Transverse colon (tissue), 4 donors: ENCODE measurements at regions of chr17 and their contacts with region 1.

Region 1: DNA sequence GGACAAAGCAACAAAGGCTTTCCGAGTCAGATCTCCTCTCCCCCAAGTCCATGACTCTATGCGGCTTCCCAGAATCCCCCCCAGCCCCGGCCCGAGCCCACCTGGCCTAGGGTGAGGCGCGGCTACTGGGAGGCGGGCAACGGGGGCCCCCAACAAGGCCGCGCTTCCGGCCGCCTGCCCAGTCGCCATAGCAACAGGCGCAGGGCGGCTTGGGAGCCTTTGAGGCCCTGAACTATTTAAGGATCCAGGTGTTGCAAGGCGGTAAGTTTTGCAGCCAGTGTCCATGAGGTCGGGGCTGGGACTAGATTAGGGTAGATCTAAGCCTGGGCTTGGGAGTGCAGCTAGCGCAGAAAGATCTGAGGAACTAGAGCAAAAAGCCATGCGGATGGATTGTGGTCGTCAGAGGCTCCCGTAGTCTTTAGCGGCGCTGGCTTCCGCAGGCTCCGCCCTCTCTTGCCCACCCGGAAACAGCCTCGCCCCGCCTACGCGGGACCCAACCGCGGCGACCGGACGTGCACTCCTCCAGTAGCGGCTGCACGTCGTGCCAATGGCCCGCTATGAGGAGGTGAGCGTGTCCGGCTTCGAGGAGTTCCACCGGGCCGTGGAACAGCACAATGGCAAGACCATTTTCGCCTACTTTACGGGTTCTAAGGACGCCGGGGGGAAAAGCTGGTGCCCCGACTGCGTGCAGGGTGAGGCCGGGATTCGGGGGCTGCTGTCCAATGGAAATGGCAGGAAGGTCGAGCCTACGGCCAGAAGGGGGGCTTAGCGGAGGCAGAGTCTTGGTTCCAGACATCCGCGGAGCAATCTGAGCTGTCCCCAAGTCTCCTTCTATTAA is at the starts of genes KIAA0753 and TXNDC17:
- DNase-seq: peak; percentile 94
- H3K4me3 ChIP-seq: peak within 1 kb of the TSS; percentile 73 to 92 (median 78)
- H3K27ac ChIP-seq: peak within 1 kb of the TSS; percentile 85 to 94 (median 92)
- H3K4me1 ChIP-seq: peaks cover 20 to 33% (median 30%) of the 10 kb centered on the region in 4 donors
- H3K27me3 ChIP-seq: no peaks in the 10 kb centered on the region
- CTCF ChIP-seq: no peak
- EP300 ChIP-seq: no peak
- POLR2A ChIP-seq: peak; percentile 95
- total RNA-seq, gene KIAA0753: 9.8 to 41.1 (median 16.9) TPM
- total RNA-seq, gene TXNDC17: 60.2 to 439 (median 238) TPM

Region 2: GRCh38 chr17:5080591-5080990 is 1560.2 kb before region 1 on chr17:
- in situ Hi-C with region 1: no loop called
- intact Hi-C with region 1: loop called (anchors 5 kb)
- DNase-seq: no peak
- H3K4me3 ChIP-seq: no peak overlapping the region
- H3K27ac ChIP-seq: no peak overlapping the region
- H3K4me1 ChIP-seq: peaks cover 5 to 20% (median 11%) of the 10 kb centered on the region in 4 donors
- H3K27me3 ChIP-seq: no peaks in the 10 kb centered on the region
- CTCF ChIP-seq: no peak
- EP300 ChIP-seq: no peak
- POLR2A ChIP-seq: no peak

Region 3: GRCh38 chr17:6374761-6375312 is 265.9 kb before region 1 on chr17:
- in situ Hi-C with region 1: no loop called
- intact Hi-C with region 1: no loop called
- DNase-seq: no peak
- H3K4me3 ChIP-seq: no peak overlapping the region
- H3K27ac ChIP-seq: no peak overlapping the region
- H3K4me1 ChIP-seq: no peaks in the 10 kb centered on the region
- H3K27me3 ChIP-seq: peaks cover 10% of the 10 kb centered on the region
- CTCF ChIP-seq: no peak
- EP300 ChIP-seq: no peak
- POLR2A ChIP-seq: no peak

Region 4: GRCh38 chr17:6651357-6651918 is 10.7 kb after region 1 on chr17 and contains the starts of genes C17orf100 and MED31:
- in situ Hi-C with region 1: no loop called
- intact Hi-C with region 1: no loop called
- DNase-seq: peak; percentile 98
- H3K4me3 ChIP-seq: peak within 1 kb of the TSS; percentile 63 to 90 (median 80)
- H3K27ac ChIP-seq: peak within 1 kb of the TSS; percentile 94 to 97 (median 96)
- H3K4me1 ChIP-seq: peaks cover 13 to 48% (median 28%) of the 10 kb centered on the region in 4 donors
- H3K27me3 ChIP-seq: peaks cover 24% of the 10 kb centered on the region
- CTCF ChIP-seq: no peak
- EP300 ChIP-seq: no peak
- POLR2A ChIP-seq: peak; percentile 82
- total RNA-seq, gene C17orf100: 1.4 to 1.7 TPM in 2 of 4 donors, not detected in the others
- total RNA-seq, gene MED31: 1.2 to 36.3 (median 5.9) TPM

Region 5: GRCh38 chr17:7014261-7014994 is 373.7 kb after region 1 on chr17:
- in situ Hi-C with region 1: loop called in 1 of 4 experiments (anchors 25 kb)
- intact Hi-C with region 1: no loop called
- DNase-seq: peak; percentile 99
- H3K4me3 ChIP-seq: peak overlapping the region; percentile 73 to 97 (median 84)
- H3K27ac ChIP-seq: peak overlapping the region; percentile 95 to 98 (median 96)
- H3K4me1 ChIP-seq: peaks cover 15 to 67% (median 40%) of the 10 kb centered on the region in 4 donors
- H3K27me3 ChIP-seq: no peaks in the 10 kb centered on the region
- CTCF ChIP-seq: peak; percentile 39 to 90 (median 75)
- EP300 ChIP-seq: peak; percentile 36
- POLR2A ChIP-seq: peak; percentile 96

Region 6: DNA sequence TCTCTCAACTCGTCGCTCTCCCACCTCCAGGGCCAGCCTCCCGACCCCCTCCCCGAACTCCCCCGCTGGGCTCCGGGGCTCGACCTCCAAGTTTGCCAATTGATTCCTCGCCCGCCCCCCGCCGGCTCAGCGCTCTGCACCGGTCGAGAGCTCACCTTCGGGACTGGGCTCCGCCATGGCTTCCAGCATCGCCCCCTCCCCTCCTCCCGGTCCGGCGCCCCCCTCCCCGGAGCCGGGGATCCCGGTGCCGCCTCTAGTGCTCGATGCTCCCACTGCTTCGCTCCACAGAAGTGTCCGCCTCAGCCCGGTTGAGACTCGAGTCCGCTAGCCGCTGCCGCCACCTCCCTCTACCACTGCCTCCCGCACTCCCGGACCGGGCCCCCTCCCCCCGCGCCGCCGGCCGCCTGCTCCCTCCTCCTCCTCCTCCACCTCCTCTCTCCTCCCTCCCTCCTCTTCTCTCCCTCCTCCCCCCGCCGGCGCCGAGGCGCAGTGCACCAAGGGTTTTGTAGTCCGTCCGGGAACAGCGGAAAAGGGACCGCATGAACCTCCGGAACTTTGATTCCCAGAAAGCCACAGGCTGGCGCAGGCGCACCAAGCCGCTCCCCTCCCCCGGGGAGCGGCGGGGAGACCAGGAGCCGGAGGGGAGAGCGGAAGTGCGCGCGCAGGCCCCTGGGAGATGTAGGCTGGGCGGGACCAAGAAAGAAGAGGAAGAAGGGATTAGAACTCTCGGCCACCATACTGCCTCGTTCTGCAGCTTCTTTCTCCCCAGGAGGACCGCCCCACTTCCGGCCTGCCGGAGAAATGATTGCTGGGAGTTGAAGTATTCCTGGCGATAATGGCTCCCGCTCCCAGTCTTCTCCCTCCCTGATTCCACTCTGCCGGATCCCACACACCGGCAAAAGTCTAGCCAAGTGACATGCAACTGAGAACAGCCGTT is 598.6 kb after region 1 on chr17 and contains the start of gene PHF23:
- in situ Hi-C with region 1: no loop called
- intact Hi-C with region 1: no loop called
- DNase-seq: peak; percentile 99
- H3K4me3 ChIP-seq: peak within 1 kb of the TSS; percentile 81 to 95 (median 86)
- H3K27ac ChIP-seq: peak within 1 kb of the TSS; percentile 96 to 99 (median 98)
- H3K4me1 ChIP-seq: peaks cover 31 to 61% (median 45%) of the 10 kb centered on the region in 4 donors
- H3K27me3 ChIP-seq: no peaks in the 10 kb centered on the region
- CTCF ChIP-seq: peak in 3 of 5 experiments; percentile 20 to 77 (median 70)
- EP300 ChIP-seq: peak; percentile 48
- POLR2A ChIP-seq: peak; percentile 80
- total RNA-seq, gene PHF23: 20.6 to 33.5 (median 27.8) TPM